PC-9 (cell line): ENCODE measurements at regions of chr17 and their contacts with region 1.

Region 1: GRCh38 chr17:59853168-59853918 is 39.4 kb downstream of the TUBD1 start:
- DNase-seq: peak; percentile 92 to 100
- H3K4me3 ChIP-seq: peak overlapping the region; percentile 12; the same call in 1 of the 2 replicates
- H3K27ac ChIP-seq: peak overlapping the region; percentile 98
- H3K4me1 ChIP-seq: peaks cover 91% of the 10 kb centered on the region
- H3K27me3 ChIP-seq: no peaks in the 10 kb centered on the region
- CTCF ChIP-seq: peak; percentile 83

Region 2: GRCh38 chr17:59311130-59311920 is 542.0 kb before region 1 on chr17:
- CTCF ChIA-PET with region 1: no interaction called
- POLR2A ChIA-PET with region 1: no interaction called
- intact Hi-C with region 1: no loop called
- DNase-seq: peak; percentile 42 to 62
- H3K4me3 ChIP-seq: no peak overlapping the region
- H3K27ac ChIP-seq: no peak overlapping the region
- H3K4me1 ChIP-seq: no peaks in the 10 kb centered on the region
- H3K27me3 ChIP-seq: no peaks in the 10 kb centered on the region
- CTCF ChIP-seq: peak; percentile 94

Region 3: GRCh38 chr17:59695945-59696692 is 157.2 kb before region 1 on chr17:
- CTCF ChIA-PET with region 1: no interaction called
- POLR2A ChIA-PET with region 1: no interaction called
- intact Hi-C with region 1: no loop called
- DNase-seq: no peak
- H3K4me3 ChIP-seq: no peak overlapping the region
- H3K27ac ChIP-seq: peak overlapping the region; percentile 81
- H3K4me1 ChIP-seq: peaks cover 12% of the 10 kb centered on the region; the same call in 1 of the 2 replicates
- H3K27me3 ChIP-seq: no peaks in the 10 kb centered on the region
- CTCF ChIP-seq: no peak

Region 4: DNA sequence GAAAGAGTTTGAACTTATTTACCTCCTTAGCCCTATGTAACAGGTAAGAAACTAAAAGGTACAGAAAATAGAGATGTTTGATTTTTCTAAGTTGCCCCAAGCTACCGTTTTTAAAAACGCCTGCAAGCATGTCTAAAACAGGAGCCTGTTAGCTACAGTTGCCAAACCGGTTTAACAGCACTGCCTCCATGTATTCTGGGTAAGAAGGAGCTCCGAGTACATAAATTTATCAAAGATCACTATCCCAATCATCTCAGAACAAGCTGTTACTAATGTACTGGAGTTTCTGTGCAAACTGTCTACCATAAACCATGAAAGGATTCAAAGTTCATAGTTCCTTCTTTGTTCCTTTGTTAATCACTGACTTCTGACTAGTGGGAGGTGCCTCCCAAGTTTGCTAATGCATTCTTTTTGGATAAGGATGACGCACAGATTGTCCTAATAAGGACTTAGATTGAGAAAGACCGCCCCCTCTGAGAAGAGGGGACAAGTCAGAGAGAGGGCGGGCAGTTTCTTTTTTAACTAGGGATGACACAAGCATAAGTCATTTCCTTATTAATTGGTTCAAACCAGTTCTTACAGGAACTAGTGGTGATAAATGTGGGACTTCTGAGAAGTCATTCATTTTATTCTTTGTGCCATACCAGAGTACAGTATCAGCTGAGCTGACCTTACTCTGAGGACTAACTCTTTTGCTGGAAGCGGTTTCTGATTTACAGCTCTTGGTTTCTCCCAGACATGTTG is 15.9 kb before region 1 on chr17:
- CTCF ChIA-PET with region 1: no interaction called
- POLR2A ChIA-PET with region 1: interaction called, 39 read pairs
- intact Hi-C with region 1: no loop called
- DNase-seq: peak; percentile 75 to 100
- H3K4me3 ChIP-seq: peak overlapping the region; percentile 88
- H3K27ac ChIP-seq: peak overlapping the region; percentile 99
- H3K4me1 ChIP-seq: peaks cover 55% of the 10 kb centered on the region
- H3K27me3 ChIP-seq: no peaks in the 10 kb centered on the region
- CTCF ChIP-seq: no peak

Region 5: DNA sequence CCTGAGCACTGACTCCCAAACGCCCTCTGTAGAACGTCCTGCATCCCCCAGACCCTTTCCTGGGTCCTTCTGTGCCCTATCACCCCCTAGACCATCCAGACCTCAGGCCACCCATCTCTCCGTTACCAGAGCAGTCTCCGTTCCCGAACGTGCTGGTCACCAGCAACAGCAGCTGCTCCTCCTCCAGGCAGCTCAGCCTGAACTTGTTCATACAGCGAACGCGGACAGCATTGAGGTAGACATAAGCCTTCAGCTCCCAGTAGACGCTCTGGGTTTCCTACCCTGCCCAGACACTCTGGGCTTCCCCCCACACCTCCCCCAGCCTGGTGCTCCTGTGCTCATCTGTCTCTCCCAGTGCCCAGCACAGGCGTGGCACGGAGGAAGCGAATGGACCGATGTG is 152.8 kb after region 1 on chr17:
- CTCF ChIA-PET with region 1: no interaction called
- POLR2A ChIA-PET with region 1: no interaction called
- intact Hi-C with region 1: no loop called
- DNase-seq: no peak
- H3K4me3 ChIP-seq: no peak overlapping the region
- H3K27ac ChIP-seq: no peak overlapping the region
- H3K4me1 ChIP-seq: no peaks in the 10 kb centered on the region
- H3K27me3 ChIP-seq: no peaks in the 10 kb centered on the region
- CTCF ChIP-seq: no peak

Region 6: GRCh38 chr17:60630352-60630751 is 777.0 kb after region 1 on chr17:
- CTCF ChIA-PET with region 1: no interaction called
- POLR2A ChIA-PET with region 1: no interaction called
- intact Hi-C with region 1: no loop called
- DNase-seq: no peak
- H3K4me3 ChIP-seq: no peak overlapping the region
- H3K27ac ChIP-seq: no peak overlapping the region
- H3K4me1 ChIP-seq: no peaks in the 10 kb centered on the region
- H3K27me3 ChIP-seq: no peaks in the 10 kb centered on the region
- CTCF ChIP-seq: no peak